ENCODE measurements at regions of chr9 and their contacts with region 1.

Region 1: DNA sequence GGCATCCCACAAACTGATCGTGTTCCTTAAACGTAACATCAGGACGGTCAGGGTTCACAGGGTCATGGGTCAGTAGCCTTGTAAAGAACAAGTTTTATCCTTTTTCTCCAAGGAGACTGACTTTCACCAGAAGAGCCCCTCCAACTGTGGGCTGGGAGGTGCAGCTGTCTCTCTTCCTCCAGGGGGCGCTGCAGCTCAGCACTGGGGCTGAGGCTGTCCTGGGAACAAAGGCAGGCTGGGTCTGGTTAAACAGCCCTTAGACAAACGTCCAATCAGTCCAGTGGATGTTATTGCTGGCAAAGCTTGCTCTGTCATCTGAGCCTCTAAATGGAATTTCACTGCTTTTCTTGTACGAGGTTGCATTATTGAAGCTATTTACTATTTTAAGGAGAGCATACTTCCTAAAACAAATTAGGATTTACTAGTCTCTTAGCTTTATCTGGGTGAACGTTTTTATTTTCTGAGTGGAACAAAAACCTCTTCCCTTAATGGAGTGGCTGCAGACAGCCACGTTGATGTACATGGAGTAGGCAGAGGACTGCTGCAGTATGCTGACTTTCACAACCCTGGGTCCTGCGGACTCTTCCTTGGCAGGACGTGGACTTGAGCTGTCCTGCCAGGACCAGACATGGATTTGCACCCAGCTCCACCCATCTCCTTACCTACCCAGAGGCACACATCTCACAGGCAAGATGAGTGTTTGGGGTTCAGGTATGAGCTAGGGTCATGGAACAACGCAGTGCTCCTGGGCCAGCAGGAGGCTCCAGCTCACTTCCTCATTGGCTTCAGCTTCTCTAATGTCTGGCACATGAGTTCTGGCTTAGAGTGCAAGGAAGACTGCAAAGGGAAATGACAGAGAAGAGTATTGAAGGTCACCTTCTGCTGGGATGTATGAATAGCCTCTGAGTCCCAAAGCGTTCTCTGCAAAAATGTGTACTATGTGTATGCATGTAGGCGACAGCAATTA is 7.8 kb downstream of the EXOSC2 start:
- DNase-seq: peak; percentile 57 to 87
- ATAC-seq: peak; percentile 94

Region 2: GRCh38 chr9:130824643-130825350 is 123.5 kb after region 1 on chr9:
- intact Hi-C with region 1: no loop called
- DNase-seq: no peak
- ATAC-seq: peak; percentile 88

Region 3: DNA sequence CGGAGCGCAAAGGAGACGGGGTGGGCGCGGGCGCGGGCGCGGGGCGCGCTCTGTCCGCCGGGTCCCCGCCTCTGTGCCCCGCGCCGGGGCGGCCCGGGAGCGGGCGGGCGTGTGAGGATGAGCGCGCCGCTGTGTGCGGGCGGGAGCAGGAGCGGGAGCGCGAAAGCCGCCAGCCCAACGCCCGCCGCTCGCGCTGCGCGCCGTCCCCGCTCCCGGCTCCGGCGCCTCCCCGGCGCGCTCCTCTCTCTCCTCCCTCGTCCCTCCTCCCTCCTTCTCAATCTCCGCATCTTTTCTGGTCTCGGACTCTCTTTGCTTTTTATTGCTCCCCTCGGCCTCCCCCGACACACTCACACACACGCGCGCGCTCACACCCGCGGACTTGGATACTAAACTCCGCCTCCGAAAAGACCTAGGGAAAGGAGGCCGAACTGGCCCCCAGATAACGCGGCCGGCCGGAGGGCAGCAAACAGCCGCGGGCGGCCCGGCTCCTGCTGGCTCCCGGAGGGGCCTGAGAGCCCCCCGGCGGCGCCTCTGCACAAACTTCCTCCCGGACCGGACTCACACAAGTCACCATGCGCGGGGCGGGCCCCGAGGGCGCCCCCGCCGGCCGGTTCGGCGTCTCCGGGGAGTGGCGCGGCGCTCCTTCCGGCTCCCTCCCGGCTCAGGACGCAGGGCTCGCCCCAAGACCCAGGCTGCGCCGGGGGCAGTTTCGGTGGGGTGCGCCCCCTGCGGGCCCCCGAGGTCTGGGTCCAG is 237.5 kb after region 1 on chr9 and contains the start of gene FIBCD1:
- intact Hi-C with region 1: loop called in 1 of 2 experiments (anchors 5 kb)
- DNase-seq: peak; percentile 57 to 68
- ATAC-seq: peak; percentile 71
- total RNA-seq, gene FIBCD1: 7.9 to 9.6 TPM

Region 4: GRCh38 chr9:131046581-131047202 is 345.4 kb after region 1 on chr9:
- intact Hi-C with region 1: loop called in 1 of 2 experiments (anchors 10 kb)
- DNase-seq: peak in 1 of 2 donors; percentile 76
- ATAC-seq: peak; percentile 92

Measured in left colon (tissue), 2 donors.